ENCODE measurements at regions of chr2 and their contacts with region 1.

Region 1: GRCh38 chr2:206159346-206160124 is at the starts of genes EEF1B2 and NDUFS1:
- DNase-seq: peak; percentile 98
- H3K4me3 Mint-ChIP-seq: peak within 1 kb of the TSS; percentile 96
- H3K27ac Mint-ChIP-seq: peak within 1 kb of the TSS; percentile 97
- H3K4me1 Mint-ChIP-seq: peaks cover 50% of the 10 kb centered on the region
- H3K27me3 Mint-ChIP-seq: no peaks in the 10 kb centered on the region
- total RNA-seq, gene EEF1B2: 1,328 to 1,373 TPM
- total RNA-seq, gene NDUFS1: 81.1 to 83.3 TPM

Region 2: DNA sequence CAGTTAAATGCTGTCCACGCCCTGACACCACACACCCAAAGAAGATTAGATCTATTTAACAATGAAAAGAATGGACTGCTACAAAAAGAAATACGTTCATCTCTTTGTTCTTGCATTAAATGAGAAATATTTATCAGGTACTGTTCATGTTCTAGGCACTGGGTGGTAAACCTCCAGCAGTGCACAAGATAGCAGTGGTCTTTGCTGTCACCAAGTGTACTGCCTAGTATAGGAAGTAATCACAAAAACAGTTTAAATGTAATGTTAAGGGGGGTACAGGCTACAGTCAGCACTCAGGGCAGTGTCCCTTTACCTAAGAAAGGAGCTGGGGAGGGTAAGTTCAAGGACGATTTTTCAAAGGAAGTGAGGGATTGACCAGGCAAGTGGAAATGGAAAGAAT is 1170.7 kb before region 1 on chr2:
- CTCF ChIA-PET with region 1: no interaction called
- intact Hi-C with region 1: no loop called
- DNase-seq: no peak
- H3K4me3 Mint-ChIP-seq: no peak overlapping the region
- H3K27ac Mint-ChIP-seq: no peak overlapping the region
- H3K4me1 Mint-ChIP-seq: no peaks in the 10 kb centered on the region
- H3K27me3 Mint-ChIP-seq: no peaks in the 10 kb centered on the region

Region 3: DNA sequence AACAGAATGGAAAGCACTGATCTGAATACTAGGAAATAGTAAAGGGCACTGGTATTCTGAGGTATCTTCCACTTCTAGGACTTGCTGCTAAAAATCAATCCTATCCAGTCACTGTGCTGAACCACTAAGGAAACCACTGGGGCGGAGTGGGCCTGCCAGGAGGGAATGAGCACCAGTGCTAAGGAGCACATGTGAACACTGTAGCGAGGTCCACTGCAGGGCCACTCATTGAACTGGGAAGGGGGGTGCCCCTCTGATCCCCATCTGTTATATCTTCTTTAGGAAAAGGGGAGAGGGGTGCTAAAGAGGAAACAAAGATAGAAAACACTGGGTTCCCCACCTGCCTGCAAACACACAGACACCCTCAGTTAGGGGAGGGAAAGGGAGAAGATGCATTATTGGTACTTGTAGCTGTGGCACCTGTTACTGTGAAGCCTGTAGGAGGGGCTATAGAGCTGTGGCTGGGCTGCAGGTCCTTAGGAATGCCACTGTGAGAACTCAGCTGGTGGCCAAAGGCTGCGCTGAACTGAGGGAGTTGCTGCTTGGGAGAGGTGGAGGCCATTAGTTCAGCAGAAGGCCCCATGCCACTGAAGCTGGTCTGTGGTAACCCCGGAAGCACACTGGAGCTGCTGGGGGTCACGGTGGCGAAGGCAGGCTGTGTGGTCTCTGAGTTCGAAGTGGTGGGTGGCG is 155.4 kb before region 1 on chr2:
- CTCF ChIA-PET with region 1: interaction called, 3 read pairs
- intact Hi-C with region 1: loop called (anchors 5 kb)
- DNase-seq: peak; percentile 44
- H3K4me3 Mint-ChIP-seq: no peak overlapping the region
- H3K27ac Mint-ChIP-seq: no peak overlapping the region
- H3K4me1 Mint-ChIP-seq: peaks cover under 1% of the 10 kb centered on the region
- H3K27me3 Mint-ChIP-seq: no peaks in the 10 kb centered on the region

Region 4: DNA sequence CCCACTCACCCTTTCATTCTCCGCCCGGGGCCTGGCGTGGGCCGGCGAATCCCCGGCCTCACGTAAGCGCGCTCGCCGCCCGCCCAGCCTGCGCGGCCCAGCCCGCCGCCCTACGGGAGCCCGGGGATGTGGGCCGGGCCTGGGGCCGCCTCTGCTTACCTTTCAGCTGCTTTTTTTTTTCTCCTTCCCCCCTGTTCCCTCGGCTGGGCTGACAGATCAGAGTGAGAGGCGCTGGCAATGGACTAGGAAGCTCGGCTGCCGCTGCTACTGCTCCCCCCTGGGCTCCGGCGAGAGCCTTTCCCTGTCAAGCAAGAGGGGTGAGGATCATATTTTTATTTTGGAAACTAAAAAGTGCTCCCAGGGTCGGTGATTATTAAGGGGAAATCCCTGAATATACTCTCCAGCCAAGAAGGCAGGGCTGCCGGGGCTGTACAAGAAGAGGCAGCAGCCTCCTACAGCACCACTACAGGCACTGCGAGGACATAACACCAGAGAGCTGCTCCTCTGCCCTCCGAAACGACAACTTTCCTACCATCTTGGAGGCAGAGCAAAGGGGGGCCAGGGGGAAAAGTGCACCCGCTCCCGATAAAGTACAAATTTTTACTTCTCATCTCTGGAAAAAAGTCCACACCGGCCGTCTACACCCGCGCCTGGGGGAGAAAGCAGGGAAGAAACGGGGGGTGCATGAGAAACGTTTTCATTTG is 73.6 kb before region 1 on chr2 and contains the start of gene INO80D:
- CTCF ChIA-PET with region 1: interaction called, 3 read pairs
- intact Hi-C with region 1: loop called (anchors 1 kb)
- DNase-seq: peak; percentile 86
- H3K4me3 Mint-ChIP-seq: peak within 1 kb of the TSS; percentile 97
- H3K27ac Mint-ChIP-seq: peak within 1 kb of the TSS; percentile 100
- H3K4me1 Mint-ChIP-seq: peaks cover 35% of the 10 kb centered on the region
- H3K27me3 Mint-ChIP-seq: no peaks in the 10 kb centered on the region
- total RNA-seq, gene INO80D: 14.8 to 15.0 TPM

Region 5: DNA sequence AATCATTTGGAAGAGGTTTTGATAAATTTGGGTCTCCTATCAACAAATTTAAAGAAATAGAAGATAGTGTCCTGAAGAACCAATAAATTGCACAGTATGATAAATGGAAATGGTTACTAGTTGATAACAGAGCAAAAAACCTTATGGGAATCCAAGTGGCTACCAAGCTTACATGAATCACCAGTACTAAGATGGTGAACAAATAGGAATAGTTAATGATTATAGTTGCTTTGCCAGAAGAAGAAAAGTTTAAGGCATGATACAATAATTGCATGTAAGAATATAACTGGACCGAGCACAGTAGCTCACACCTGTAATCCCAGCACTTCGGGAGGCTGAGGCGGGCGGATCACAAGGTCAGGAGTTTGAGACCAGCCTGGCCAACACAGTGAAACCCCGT is 54.0 kb before region 1 on chr2:
- CTCF ChIA-PET with region 1: no interaction called
- intact Hi-C with region 1: no loop called
- DNase-seq: no peak
- H3K4me3 Mint-ChIP-seq: no peak overlapping the region
- H3K27ac Mint-ChIP-seq: no peak overlapping the region
- H3K4me1 Mint-ChIP-seq: no peaks in the 10 kb centered on the region
- H3K27me3 Mint-ChIP-seq: no peaks in the 10 kb centered on the region

Region 6: GRCh38 chr2:206361407-206362045 is 202.0 kb after region 1 on chr2:
- CTCF ChIA-PET with region 1: no interaction called
- intact Hi-C with region 1: loop called (anchors 1 kb)
- DNase-seq: no peak
- H3K4me3 Mint-ChIP-seq: no peak overlapping the region
- H3K27ac Mint-ChIP-seq: no peak overlapping the region
- H3K4me1 Mint-ChIP-seq: peaks cover 2% of the 10 kb centered on the region
- H3K27me3 Mint-ChIP-seq: peaks cover 2% of the 10 kb centered on the region

Region 7: GRCh38 chr2:206556357-206556949 is 396.9 kb after region 1 on chr2:
- CTCF ChIA-PET with region 1: no interaction called
- intact Hi-C with region 1: loop called (anchors 2 kb)
- DNase-seq: no peak
- H3K4me3 Mint-ChIP-seq: no peak overlapping the region
- H3K27ac Mint-ChIP-seq: no peak overlapping the region
- H3K4me1 Mint-ChIP-seq: peaks cover 13% of the 10 kb centered on the region
- H3K27me3 Mint-ChIP-seq: peaks cover 4% of the 10 kb centered on the region

Measured in activated naive CD4-positive, alpha-beta T cell treated with anti-CD3 and anti-CD28 coated beads for 36 hours (primary cell).